ENCODE measurements at regions of chr14 and their contacts with region 1.

Region 1: DNA sequence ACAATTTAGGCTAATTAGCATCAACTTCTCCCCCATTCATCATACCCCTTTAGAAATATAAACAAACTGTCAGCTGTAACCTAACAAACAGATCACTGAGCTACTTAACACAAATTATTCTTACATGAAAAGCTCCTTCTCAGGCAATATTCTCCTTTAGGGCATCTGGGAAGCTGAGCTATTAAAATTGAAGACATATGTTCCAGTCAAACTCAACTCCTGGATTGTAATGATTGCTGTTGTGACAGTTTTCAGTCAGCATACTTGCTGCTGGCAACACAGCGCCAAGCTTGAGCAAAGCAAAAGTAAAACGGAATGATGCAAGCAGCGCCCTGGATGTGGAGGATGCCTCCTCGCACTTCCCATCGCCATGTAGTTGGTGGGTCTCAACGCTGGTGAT is 82.4 kb downstream of the SLC25A21 start:
- DNase-seq: no peak
- H3K4me3 ChIP-seq: no peak overlapping the region
- H3K27ac ChIP-seq: no peak overlapping the region
- H3K4me1 ChIP-seq: no peaks in the 10 kb centered on the region
- H3K27me3 ChIP-seq: no peaks in the 10 kb centered on the region
- CTCF ChIP-seq: no peak
- EP300 ChIP-seq: no peak
- POLR2A ChIP-seq: no peak

Region 2: GRCh38 chr14:36901861-36902260 is 188.2 kb before region 1 on chr14:
- intact Hi-C with region 1: loop called in 1 of 4 experiments (anchors 10 kb)
- DNase-seq: no peak
- H3K4me3 ChIP-seq: no peak overlapping the region
- H3K27ac ChIP-seq: no peak overlapping the region
- H3K4me1 ChIP-seq: no peaks in the 10 kb centered on the region
- H3K27me3 ChIP-seq: no peaks in the 10 kb centered on the region
- CTCF ChIP-seq: no peak
- EP300 ChIP-seq: no peak
- POLR2A ChIP-seq: no peak

Region 3: DNA sequence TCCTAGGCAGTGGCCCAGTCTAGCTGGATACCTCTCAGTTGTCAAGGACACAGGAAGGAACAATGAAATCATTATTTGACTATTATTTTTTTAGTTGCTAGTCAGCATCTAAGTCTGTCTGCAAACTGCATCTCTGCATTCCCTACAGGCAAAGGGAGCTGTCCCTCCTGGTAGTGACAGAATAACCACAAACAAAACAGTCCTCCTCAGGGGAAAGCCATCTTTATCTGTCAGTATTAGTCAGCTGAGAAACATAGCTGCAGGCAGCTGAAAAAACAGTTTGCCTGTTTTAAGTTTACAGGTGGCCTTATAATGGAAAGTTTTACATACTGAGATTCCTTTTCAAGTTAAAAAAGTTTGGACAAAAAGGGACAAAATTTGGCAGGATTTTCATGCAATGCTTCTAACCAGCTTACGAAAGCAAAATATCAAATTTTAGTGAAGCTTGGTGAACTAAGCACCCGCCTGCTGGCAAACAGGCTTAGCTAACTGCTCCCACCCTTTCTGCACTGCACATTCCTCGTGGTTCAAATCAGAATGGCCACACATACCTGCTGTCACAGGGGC is 52.9 kb after region 1 on chr14:
- intact Hi-C with region 1: no loop called
- DNase-seq: no peak
- H3K4me3 ChIP-seq: no peak overlapping the region
- H3K27ac ChIP-seq: no peak overlapping the region
- H3K4me1 ChIP-seq: no peaks in the 10 kb centered on the region
- H3K27me3 ChIP-seq: no peaks in the 10 kb centered on the region
- CTCF ChIP-seq: no peak
- EP300 ChIP-seq: no peak
- POLR2A ChIP-seq: no peak

Region 4: DNA sequence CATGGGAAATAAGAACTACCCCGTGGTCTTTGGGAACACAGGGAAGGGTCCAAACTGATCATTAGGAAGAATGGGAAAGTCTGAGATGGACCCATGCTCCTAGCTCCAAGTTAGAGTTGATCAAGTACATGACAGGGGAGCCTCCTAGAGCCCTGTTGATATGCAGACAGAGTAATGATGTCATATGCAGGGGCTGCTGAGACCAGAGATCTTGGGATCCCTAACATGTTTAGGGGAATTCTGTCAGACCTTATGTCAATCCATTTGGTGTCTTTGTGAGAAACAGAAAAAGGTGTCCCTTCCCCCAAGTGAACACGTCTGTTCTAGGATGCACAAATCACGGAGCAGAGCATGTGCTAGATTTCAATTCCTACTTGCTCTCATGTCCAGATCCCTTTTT is 75.8 kb after region 1 on chr14:
- intact Hi-C with region 1: no loop called
- DNase-seq: no peak
- H3K4me3 ChIP-seq: no peak overlapping the region
- H3K27ac ChIP-seq: no peak overlapping the region
- H3K4me1 ChIP-seq: no peaks in the 10 kb centered on the region
- H3K27me3 ChIP-seq: no peaks in the 10 kb centered on the region
- CTCF ChIP-seq: no peak
- EP300 ChIP-seq: no peak
- POLR2A ChIP-seq: no peak